ENCODE measurements at regions of chr12 and their contacts with region 1.

Region 1: GRCh38 chr12:64696080-64696741 is 63.0 kb downstream of the GNS start:
- DNase-seq: peak in 1 of 9 experiments; percentile 55
- ATAC-seq: no peak
- H3K4me3 ChIP-seq: no peak overlapping the region
- H3K4me3 Mint-ChIP-seq: peak overlapping the region; percentile 56
- H3K27ac ChIP-seq: peak overlapping the region in 1 of 2 experiments; percentile 36
- H3K27ac Mint-ChIP-seq: peak overlapping the region; percentile 91
- H3K4me1 ChIP-seq: peaks cover 79% of the 10 kb centered on the region
- H3K4me1 Mint-ChIP-seq: peaks cover 82% of the 10 kb centered on the region
- H3K27me3 ChIP-seq: no peaks in the 10 kb centered on the region
- H3K27me3 Mint-ChIP-seq: no peaks in the 10 kb centered on the region
- CTCF ChIP-seq: no peak

Region 2: GRCh38 chr12:64373193-64373592 is 323.0 kb before region 1 on chr12:
- CTCF ChIA-PET with region 1: no interaction called
- POLR2A ChIA-PET with region 1: no interaction called
- intact Hi-C with region 1: no loop called
- DNase-seq: no peak
- ATAC-seq: no peak
- H3K4me3 ChIP-seq: no peak overlapping the region
- H3K4me3 Mint-ChIP-seq: no peak overlapping the region
- H3K27ac ChIP-seq: no peak overlapping the region
- H3K27ac Mint-ChIP-seq: no peak overlapping the region
- H3K4me1 ChIP-seq: no peaks in the 10 kb centered on the region
- H3K4me1 Mint-ChIP-seq: no peaks in the 10 kb centered on the region
- H3K27me3 ChIP-seq: no peaks in the 10 kb centered on the region
- H3K27me3 Mint-ChIP-seq: no peaks in the 10 kb centered on the region
- CTCF ChIP-seq: no peak

Region 3: GRCh38 chr12:64451687-64452558 is 244.3 kb before region 1 on chr12 and contains the start of gene TBK1:
- CTCF ChIA-PET with region 1: no interaction called
- POLR2A ChIA-PET with region 1: no interaction called
- intact Hi-C with region 1: loop called (anchors 5 to 10 kb)
- DNase-seq: peak; percentile 8 to 76 (median 51)
- ATAC-seq: peak; percentile 64
- H3K4me3 ChIP-seq: peak within 1 kb of the TSS; percentile 88 to 99
- H3K4me3 Mint-ChIP-seq: peak within 1 kb of the TSS; percentile 89
- H3K27ac ChIP-seq: peak within 1 kb of the TSS; percentile 76 to 93
- H3K27ac Mint-ChIP-seq: peak within 1 kb of the TSS; percentile 90
- H3K4me1 ChIP-seq: peaks cover 8% of the 10 kb centered on the region
- H3K4me1 Mint-ChIP-seq: peaks cover 40% of the 10 kb centered on the region
- H3K27me3 ChIP-seq: no peaks in the 10 kb centered on the region
- H3K27me3 Mint-ChIP-seq: no peaks in the 10 kb centered on the region
- CTCF ChIP-seq: no peak
- total RNA-seq, gene TBK1: 6.2 to 6.7 TPM

Region 4: DNA sequence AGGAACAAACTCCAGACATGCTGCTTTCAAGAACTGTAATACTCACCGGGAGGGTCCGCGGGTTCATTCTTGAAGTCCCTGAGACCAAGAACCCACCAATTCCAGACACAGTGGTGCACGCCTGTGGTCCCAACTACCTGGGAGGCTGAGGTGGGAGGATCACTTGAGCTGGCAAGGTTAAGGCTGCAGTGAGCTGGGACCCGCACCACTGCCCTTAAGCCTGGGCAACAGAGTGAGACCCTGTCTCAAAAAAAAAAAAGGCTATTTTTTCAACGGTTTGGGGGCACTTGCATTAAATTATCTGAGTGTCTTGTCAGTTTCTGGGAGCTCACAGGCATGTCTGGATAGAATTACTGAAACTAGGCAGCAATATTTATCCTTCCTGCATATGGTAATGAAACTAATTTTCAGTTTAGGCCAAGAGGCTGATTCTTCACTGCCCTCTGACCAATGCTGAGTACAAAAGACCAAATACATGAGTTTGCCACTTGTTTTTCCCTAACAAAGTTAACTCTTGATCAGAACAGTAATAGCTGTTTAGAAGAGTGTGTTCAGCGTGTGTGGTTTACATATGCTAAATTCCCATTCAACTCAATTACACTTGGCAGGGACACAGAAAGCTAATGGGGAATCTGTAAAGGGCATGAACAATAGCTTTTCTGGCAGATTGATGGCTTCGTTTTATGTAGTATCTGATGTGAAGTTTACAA is 151.7 kb before region 1 on chr12:
- CTCF ChIA-PET with region 1: interaction called, 317 read pairs
- POLR2A ChIA-PET with region 1: interaction called, 12 read pairs
- intact Hi-C with region 1: loop called (anchors 1 kb)
- DNase-seq: no peak
- ATAC-seq: no peak
- H3K4me3 ChIP-seq: no peak overlapping the region
- H3K4me3 Mint-ChIP-seq: no peak overlapping the region
- H3K27ac ChIP-seq: no peak overlapping the region
- H3K27ac Mint-ChIP-seq: no peak overlapping the region
- H3K4me1 ChIP-seq: no peaks in the 10 kb centered on the region
- H3K4me1 Mint-ChIP-seq: peaks cover 2% of the 10 kb centered on the region
- H3K27me3 ChIP-seq: no peaks in the 10 kb centered on the region
- H3K27me3 Mint-ChIP-seq: peaks cover 3% of the 10 kb centered on the region
- CTCF ChIP-seq: no peak

Region 5: GRCh38 chr12:64560396-64561304 is 135.6 kb before region 1 on chr12:
- CTCF ChIA-PET with region 1: interaction called, 317 read pairs
- POLR2A ChIA-PET with region 1: no interaction called
- intact Hi-C with region 1: no loop called
- DNase-seq: no peak
- ATAC-seq: no peak
- H3K4me3 ChIP-seq: no peak overlapping the region
- H3K4me3 Mint-ChIP-seq: no peak overlapping the region
- H3K27ac ChIP-seq: no peak overlapping the region
- H3K27ac Mint-ChIP-seq: no peak overlapping the region
- H3K4me1 ChIP-seq: no peaks in the 10 kb centered on the region
- H3K4me1 Mint-ChIP-seq: no peaks in the 10 kb centered on the region
- H3K27me3 ChIP-seq: no peaks in the 10 kb centered on the region
- H3K27me3 Mint-ChIP-seq: no peaks in the 10 kb centered on the region
- CTCF ChIP-seq: no peak

Region 6: GRCh38 chr12:64669270-64669842 is 26.9 kb before region 1 on chr12:
- CTCF ChIA-PET with region 1: interaction called, 15 read pairs
- POLR2A ChIA-PET with region 1: interaction called, 13 read pairs
- intact Hi-C with region 1: no loop called
- DNase-seq: peak; percentile 18 to 94 (median 57)
- ATAC-seq: peak; percentile 79
- H3K4me3 ChIP-seq: peak overlapping the region; percentile 51 to 57
- H3K4me3 Mint-ChIP-seq: peak overlapping the region; percentile 87
- H3K27ac ChIP-seq: peak overlapping the region; percentile 77 to 94
- H3K27ac Mint-ChIP-seq: peak overlapping the region; percentile 98
- H3K4me1 ChIP-seq: peaks cover 92% of the 10 kb centered on the region
- H3K4me1 Mint-ChIP-seq: peaks cover 90% of the 10 kb centered on the region
- H3K27me3 ChIP-seq: no peaks in the 10 kb centered on the region
- H3K27me3 Mint-ChIP-seq: no peaks in the 10 kb centered on the region
- CTCF ChIP-seq: no peak

Region 7: GRCh38 chr12:64706306-64706705 is 10.1 kb after region 1 on chr12:
- CTCF ChIA-PET with region 1: interaction called, 17 read pairs
- POLR2A ChIA-PET with region 1: no interaction called
- intact Hi-C with region 1: no loop called
- DNase-seq: no peak
- ATAC-seq: no peak
- H3K4me3 ChIP-seq: no peak overlapping the region
- H3K4me3 Mint-ChIP-seq: no peak overlapping the region
- H3K27ac ChIP-seq: no peak overlapping the region
- H3K27ac Mint-ChIP-seq: no peak overlapping the region
- H3K4me1 ChIP-seq: peaks cover 15% of the 10 kb centered on the region
- H3K4me1 Mint-ChIP-seq: peaks cover 12% of the 10 kb centered on the region
- H3K27me3 ChIP-seq: no peaks in the 10 kb centered on the region
- H3K27me3 Mint-ChIP-seq: no peaks in the 10 kb centered on the region
- CTCF ChIP-seq: no peak

Region 8: GRCh38 chr12:64759035-64759901 is 63.1 kb after region 1 on chr12 and contains the start of gene GNS:
- CTCF ChIA-PET with region 1: no interaction called
- POLR2A ChIA-PET with region 1: no interaction called
- intact Hi-C with region 1: loop called in 1 of 2 experiments (anchors 1 kb)
- DNase-seq: peak; percentile 81 to 95 (median 92)
- ATAC-seq: peak; percentile 86
- H3K4me3 ChIP-seq: peak within 1 kb of the TSS; percentile 70 to 80
- H3K4me3 Mint-ChIP-seq: peak within 1 kb of the TSS; percentile 97
- H3K27ac ChIP-seq: peak within 1 kb of the TSS; percentile 44 to 80
- H3K27ac Mint-ChIP-seq: peak within 1 kb of the TSS; percentile 93
- H3K4me1 ChIP-seq: peaks cover 24% of the 10 kb centered on the region
- H3K4me1 Mint-ChIP-seq: peaks cover 57% of the 10 kb centered on the region
- H3K27me3 ChIP-seq: no peaks in the 10 kb centered on the region
- H3K27me3 Mint-ChIP-seq: no peaks in the 10 kb centered on the region
- CTCF ChIP-seq: no peak
- total RNA-seq, gene GNS: 6.3 to 7.7 TPM

Measured in CD8-positive, alpha-beta T cell (primary cell).